Activated T-helper 2 cell treated with anti-CD3 and anti-CD28 coated beads, Interferon-gamma antibody, Interleukin-2, Interleukin-4, amounts not matched to agents 10 μg/mL and 5 μg/mL and 100 μg/mL, durations not matched to agents 14 hours and 24 hours and 36 hours (primary cell): ENCODE measurements at regions of chr20 and their contacts with region 1.

Region 1: GRCh38 chr20:57947421-57948179 is 237.8 kb upstream of the PMEPA1 start:
- DNase-seq: no peak
- H3K4me3 Mint-ChIP-seq: no peak overlapping the region
- H3K27ac Mint-ChIP-seq: no peak overlapping the region
- H3K4me1 Mint-ChIP-seq: no peaks in the 10 kb centered on the region
- H3K27me3 Mint-ChIP-seq: no peaks in the 10 kb centered on the region

Region 2: DNA sequence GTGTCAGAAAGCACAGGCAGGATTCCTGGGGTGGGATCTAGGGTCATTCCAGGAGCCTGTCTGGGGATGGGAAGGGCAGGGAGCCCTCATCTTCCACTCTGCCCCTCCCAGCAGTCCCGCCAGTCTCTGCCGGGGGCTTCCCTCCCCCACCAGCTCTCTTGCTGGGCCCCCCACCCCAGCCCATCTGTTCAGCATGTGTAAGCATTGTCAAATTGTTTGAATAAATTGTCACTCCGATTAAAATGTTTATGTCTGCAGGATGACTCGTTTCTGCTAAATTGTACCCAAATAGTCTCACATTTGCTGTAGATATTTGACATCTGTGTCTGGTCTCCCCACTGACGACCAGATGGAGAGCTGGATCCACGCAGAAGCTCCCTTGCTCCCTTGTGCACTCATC is 23.3 kb after region 1 on chr20:
- intact Hi-C with region 1: loop called (anchors 1 kb)
- DNase-seq: no peak
- H3K4me3 Mint-ChIP-seq: no peak overlapping the region
- H3K27ac Mint-ChIP-seq: no peak overlapping the region
- H3K4me1 Mint-ChIP-seq: no peaks in the 10 kb centered on the region
- H3K27me3 Mint-ChIP-seq: no peaks in the 10 kb centered on the region